ENCODE measurements at regions of chr1 and their contacts with region 1.

Region 1: DNA sequence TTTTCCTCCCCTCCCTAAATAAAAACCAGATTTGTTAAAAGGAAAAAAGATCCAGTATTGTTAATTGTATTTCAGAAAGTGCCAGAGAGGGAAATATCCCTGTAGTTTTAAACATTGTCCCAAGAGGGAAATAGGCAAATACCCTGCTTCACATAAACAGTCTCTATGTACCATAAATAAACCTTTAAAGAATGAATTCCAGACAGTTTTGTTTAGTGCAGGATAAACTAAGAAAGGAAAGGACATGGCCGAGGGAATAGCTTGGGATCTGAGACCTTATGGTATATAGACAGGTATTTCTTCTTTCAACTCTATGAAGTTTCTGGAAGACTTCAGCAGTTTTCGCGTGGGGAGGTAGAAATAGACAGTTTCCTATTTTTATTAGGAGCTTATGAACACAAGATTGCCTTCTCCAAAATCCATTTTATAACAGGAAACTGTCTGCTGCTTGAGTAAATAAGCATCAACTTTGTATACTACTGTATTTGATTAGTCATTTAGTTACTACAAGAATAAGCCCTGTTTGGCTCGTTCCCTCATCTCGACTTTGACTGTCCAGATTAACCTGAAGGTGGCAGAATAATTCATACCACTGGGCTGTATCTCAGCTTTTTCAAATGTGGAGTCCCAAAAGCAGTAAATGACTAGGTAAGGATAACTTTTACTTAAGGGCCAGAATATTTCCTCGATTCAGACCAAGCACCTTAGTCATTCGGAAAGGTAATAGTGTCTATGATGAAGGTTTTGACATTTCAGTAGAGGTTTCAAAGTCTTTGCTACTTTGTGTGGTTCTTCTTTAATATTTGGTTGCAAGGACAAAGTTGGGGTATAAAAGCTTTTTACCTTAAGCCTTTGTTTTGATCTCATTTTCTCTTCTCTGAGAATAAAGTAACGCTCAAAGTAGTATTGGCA is 177.5 kb downstream of the VPS13D start:
- DNase-seq: no peak
- ATAC-seq: peak; percentile 41

Region 2: GRCh38 chr1:12215118-12215961 is 192.0 kb before region 1 on chr1:
- intact Hi-C with region 1: no loop called
- DNase-seq: no peak
- ATAC-seq: no peak

Region 3: GRCh38 chr1:12619792-12620487 is 212.6 kb after region 1 on chr1:
- intact Hi-C with region 1: loop called in 1 of 2 experiments (anchors 5 kb)
- DNase-seq: peak; percentile 86 to 87
- ATAC-seq: peak; percentile 45

Measured in left colon (tissue), 2 donors.